HEK293 (cell line): ENCODE measurements at regions of chr19 and their contacts with region 1.

Region 1: GRCh38 chr19:38095411-38096308 is 128.4 kb downstream of the DPF1 start:
- H3K4me3 ChIP-seq: no peak overlapping the region
- H3K27ac ChIP-seq: no peak overlapping the region; the same call in 1 of the 2 replicates
- H3K4me1 ChIP-seq: no peaks in the 10 kb centered on the region; the same call in 1 of the 2 replicates
- CTCF ChIP-seq: peak; percentile 93

Region 2: GRCh38 chr19:37635076-37636056 is 460.3 kb before region 1 on chr19:
- CTCF ChIA-PET with region 1: no interaction called
- POLR2A ChIA-PET with region 1: no interaction called
- H3K4me3 ChIP-seq: no peak overlapping the region
- H3K27ac ChIP-seq: no peak overlapping the region
- H3K4me1 ChIP-seq: no peaks in the 10 kb centered on the region
- CTCF ChIP-seq: no peak

Region 3: GRCh38 chr19:38079926-38080380 is 15.7 kb before region 1 on chr19:
- CTCF ChIA-PET with region 1: interaction called, 10 read pairs
- POLR2A ChIA-PET with region 1: no interaction called
- H3K4me3 ChIP-seq: no peak overlapping the region
- H3K27ac ChIP-seq: no peak overlapping the region
- H3K4me1 ChIP-seq: no peaks in the 10 kb centered on the region
- CTCF ChIP-seq: no peak

Region 4: GRCh38 chr19:38134540-38135149 is 39.0 kb after region 1 on chr19:
- CTCF ChIA-PET with region 1: interaction called, 10 read pairs
- POLR2A ChIA-PET with region 1: no interaction called
- H3K4me3 ChIP-seq: no peak overlapping the region
- H3K27ac ChIP-seq: no peak overlapping the region
- H3K4me1 ChIP-seq: no peaks in the 10 kb centered on the region
- CTCF ChIP-seq: peak; percentile 96